ENCODE measurements at regions of chr17 and their contacts with region 1.

Region 1: GRCh38 chr17:50853015-50853615 is 13.0 kb downstream of the TOB1 start:
- DNase-seq: peak; percentile 53
- H3K4me3 ChIP-seq: no peak overlapping the region
- H3K27ac ChIP-seq: no peak overlapping the region
- H3K4me1 ChIP-seq: peaks cover 10% of the 10 kb centered on the region
- H3K27me3 ChIP-seq: peaks cover 7 to 16% of the 10 kb centered on the region in 2 experiments
- CTCF ChIP-seq: no peak
- POLR2A ChIP-seq: no peak

Region 2: GRCh38 chr17:50828508-50829170 is 24.5 kb before region 1 on chr17:
- CTCF ChIA-PET with region 1: interaction called, 16 read pairs
- POLR2A ChIA-PET with region 1: no interaction called
- dilution Hi-C with region 1: no loop called
- intact Hi-C with region 1: no loop called
- DNase-seq: no peak
- H3K4me3 ChIP-seq: no peak overlapping the region
- H3K27ac ChIP-seq: no peak overlapping the region
- H3K4me1 ChIP-seq: no peaks in the 10 kb centered on the region
- H3K27me3 ChIP-seq: peaks cover 2 to 3% of the 10 kb centered on the region in 2 experiments
- CTCF ChIP-seq: no peak
- POLR2A ChIP-seq: no peak

Region 3: GRCh38 chr17:50883850-50884438 is 30.8 kb after region 1 on chr17:
- CTCF ChIA-PET with region 1: interaction called, 11 read pairs
- POLR2A ChIA-PET with region 1: no interaction called
- dilution Hi-C with region 1: no loop called
- intact Hi-C with region 1: no loop called
- DNase-seq: no peak
- H3K4me3 ChIP-seq: no peak overlapping the region
- H3K27ac ChIP-seq: no peak overlapping the region
- H3K4me1 ChIP-seq: no peaks in the 10 kb centered on the region
- H3K27me3 ChIP-seq: peaks cover 5% of the 10 kb centered on the region in 2 experiments
- CTCF ChIP-seq: no peak
- POLR2A ChIP-seq: no peak

Region 4: GRCh38 chr17:50944054-50944901 is 91.2 kb after region 1 on chr17:
- CTCF ChIA-PET with region 1: interaction called, 343 read pairs
- POLR2A ChIA-PET with region 1: no interaction called
- dilution Hi-C with region 1: no loop called
- intact Hi-C with region 1: no loop called
- DNase-seq: peak; percentile 24
- H3K4me3 ChIP-seq: peak overlapping the region in 1 of 3 experiments; percentile 14
- H3K27ac ChIP-seq: no peak overlapping the region
- H3K4me1 ChIP-seq: peaks cover 4% of the 10 kb centered on the region
- H3K27me3 ChIP-seq: no peaks in the 10 kb centered on the region
- CTCF ChIP-seq: no peak
- POLR2A ChIP-seq: no peak

Region 5: DNA sequence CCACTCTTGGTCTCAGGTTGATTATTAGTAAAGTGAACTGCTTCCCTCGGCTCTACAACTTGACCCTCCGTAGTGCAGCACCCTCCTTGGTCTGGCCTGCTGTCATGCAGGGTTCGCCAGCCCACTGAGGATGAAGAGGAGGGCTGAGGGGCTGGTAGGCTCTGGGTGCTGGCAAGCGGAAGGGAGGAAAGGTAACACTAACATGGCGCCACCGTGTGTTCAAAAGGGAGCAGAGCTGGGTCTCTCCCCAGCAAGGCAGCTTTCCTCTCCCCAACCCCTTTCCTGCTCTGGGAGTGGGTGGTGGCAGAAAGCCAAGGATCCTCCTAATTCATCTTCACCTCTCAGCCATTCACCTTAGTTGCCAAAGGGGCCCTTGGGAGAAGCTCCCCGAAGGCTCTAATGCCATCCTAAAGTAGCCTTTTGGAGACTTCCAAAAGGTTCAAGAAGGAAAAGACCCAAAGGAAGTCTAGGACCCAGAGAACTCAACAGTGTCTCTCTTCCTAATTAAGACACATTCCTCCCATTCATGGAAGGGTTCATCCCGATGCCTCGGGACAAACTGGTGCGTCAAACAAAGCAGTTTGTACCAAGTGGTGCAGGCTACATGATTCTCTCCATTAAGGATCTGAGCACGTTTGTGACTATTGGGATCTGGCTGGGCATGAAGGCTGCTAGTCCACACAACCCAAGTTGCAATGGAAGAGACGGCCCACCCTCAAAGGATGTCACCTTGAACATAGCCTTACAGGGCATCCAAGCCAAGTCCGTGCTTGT is 103.8 kb after region 1 on chr17:
- CTCF ChIA-PET with region 1: interaction called, 343 read pairs
- POLR2A ChIA-PET with region 1: interaction called, 3 read pairs
- dilution Hi-C with region 1: no loop called
- intact Hi-C with region 1: loop called (anchors 1 kb)
- DNase-seq: peak; percentile 44
- H3K4me3 ChIP-seq: no peak overlapping the region
- H3K27ac ChIP-seq: no peak overlapping the region
- H3K4me1 ChIP-seq: peaks cover 7% of the 10 kb centered on the region
- H3K27me3 ChIP-seq: no peaks in the 10 kb centered on the region
- CTCF ChIP-seq: peak; percentile 76 to 87
- POLR2A ChIP-seq: no peak

Region 6: DNA sequence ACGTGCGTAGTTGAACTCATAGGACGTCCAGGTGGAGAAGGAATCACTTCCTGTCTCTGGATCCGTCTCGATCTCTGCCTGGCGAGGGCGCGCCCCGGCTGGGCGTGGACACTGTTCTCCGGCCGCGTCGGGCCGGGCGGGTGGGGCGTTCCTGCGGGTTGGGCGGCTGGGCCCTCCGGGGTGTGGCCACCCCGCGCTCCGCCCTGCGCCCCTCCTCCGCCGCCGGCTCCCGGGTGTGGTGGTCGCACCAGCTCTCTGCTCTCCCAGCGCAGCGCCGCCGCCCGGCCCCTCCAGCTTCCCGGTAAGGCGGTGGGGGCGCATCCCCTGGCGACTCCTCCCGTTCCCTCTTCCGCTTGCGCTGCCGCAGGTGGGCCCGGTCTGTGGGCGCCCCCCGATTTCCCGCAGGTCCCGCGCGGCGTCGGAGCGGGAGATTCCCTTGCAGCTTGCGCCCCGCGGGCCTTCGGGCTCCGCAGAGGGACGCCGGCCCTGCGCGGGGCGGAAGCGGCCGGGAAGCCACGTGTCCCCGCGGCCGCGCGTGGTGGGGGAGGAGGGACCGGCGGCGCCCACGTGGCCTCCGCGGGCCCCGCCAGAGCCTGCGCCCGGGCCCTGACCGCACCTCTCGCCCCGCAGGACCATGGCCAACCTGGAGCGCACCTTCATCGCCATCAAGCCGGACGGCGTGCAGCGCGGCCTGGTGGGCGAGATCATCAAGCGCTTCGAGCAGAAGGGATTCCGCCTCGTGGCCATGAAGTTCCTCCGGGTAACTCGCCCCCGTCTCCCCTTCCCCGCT is 313.3 kb after region 1 on chr17 and contains the start of gene NME2:
- CTCF ChIA-PET with region 1: no interaction called
- POLR2A ChIA-PET with region 1: no interaction called
- dilution Hi-C with region 1: no loop called
- intact Hi-C with region 1: no loop called
- DNase-seq: peak; percentile 79
- H3K4me3 ChIP-seq: peak within 1 kb of the TSS; percentile 45 to 63 (median 55)
- H3K27ac ChIP-seq: peak within 1 kb of the TSS; percentile 67
- H3K4me1 ChIP-seq: peaks cover 16% of the 10 kb centered on the region
- H3K27me3 ChIP-seq: no peaks in the 10 kb centered on the region
- CTCF ChIP-seq: peak in 1 of 2 donors; percentile 6
- POLR2A ChIP-seq: peak; percentile 74
- total RNA-seq, gene NME2: 555 and 565 TPM in 2 replicates